ENCODE measurements at regions of chr7 and their contacts with region 1.

Region 1: DNA sequence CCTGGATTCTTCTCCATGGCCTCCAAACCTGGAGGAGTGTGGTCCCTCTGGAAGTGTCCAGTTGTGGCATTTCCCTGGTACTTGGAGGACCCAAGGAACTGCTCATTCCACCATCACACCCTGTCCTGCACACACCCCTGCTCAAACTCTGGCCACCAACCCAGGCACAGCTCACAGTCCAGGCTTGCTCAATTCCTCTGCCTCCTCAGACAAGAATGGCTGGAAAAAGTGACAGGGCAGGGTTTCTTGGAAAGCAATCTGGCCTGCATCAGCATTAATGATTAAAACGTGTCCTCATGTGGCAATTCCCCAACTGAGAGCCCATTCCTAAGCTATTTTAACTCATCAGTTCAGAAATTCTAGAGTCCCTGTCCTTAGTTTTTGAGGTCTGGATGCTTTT is 17.2 kb upstream of the TPST1 start:
- DNase-seq: no peak
- H3K4me3 ChIP-seq: no peak overlapping the region
- H3K27ac ChIP-seq: no peak overlapping the region
- H3K4me1 ChIP-seq: no peaks in the 10 kb centered on the region
- H3K27me3 ChIP-seq: no peaks in the 10 kb centered on the region
- CTCF ChIP-seq: no peak

Region 2: GRCh38 chr7:66493235-66494181 is 305.6 kb after region 1 on chr7:
- CTCF ChIA-PET with region 1: no interaction called
- POLR2A ChIA-PET with region 1: interaction called, 20 read pairs
- intact Hi-C with region 1: no loop called
- DNase-seq: peak; percentile 89 to 98
- H3K4me3 ChIP-seq: peak overlapping the region; percentile 82
- H3K27ac ChIP-seq: peak overlapping the region; percentile 57
- H3K4me1 ChIP-seq: peaks cover 5% of the 10 kb centered on the region; the same call in 1 of the 2 replicates
- H3K27me3 ChIP-seq: no peaks in the 10 kb centered on the region
- CTCF ChIP-seq: no peak

Region 3: GRCh38 chr7:66542528-66543269 is 354.8 kb after region 1 on chr7:
- CTCF ChIA-PET with region 1: no interaction called
- POLR2A ChIA-PET with region 1: interaction called, 29 read pairs
- intact Hi-C with region 1: no loop called
- DNase-seq: no peak
- H3K4me3 ChIP-seq: no peak overlapping the region
- H3K27ac ChIP-seq: no peak overlapping the region
- H3K4me1 ChIP-seq: no peaks in the 10 kb centered on the region
- H3K27me3 ChIP-seq: no peaks in the 10 kb centered on the region
- CTCF ChIP-seq: no peak

Measured in PC-9 (cell line).